GM12878 (cell line): ENCODE measurements at regions of chr7 and their contacts with region 1.

Region 1: GRCh38 chr7:17640730-17641377 is 299.4 kb downstream of the SNX13 start:
- DNase-seq: no peak
- ATAC-seq: peak; percentile 63
- H3K4me3 ChIP-seq: no peak overlapping the region
- H3K27ac ChIP-seq: no peak overlapping the region
- H3K4me1 ChIP-seq: no peaks in the 10 kb centered on the region
- H3K27me3 ChIP-seq: no peaks in the 10 kb centered on the region; a peak in 2 of 4 replicates
- CTCF ChIP-seq: peak; percentile 50 to 65 (median 62)
- EP300 ChIP-seq: no peak
- POLR2A ChIP-seq: no peak
- RAD21 ChIP-seq: peak; percentile 27; the same call in 1 of the 2 replicates

Region 2: GRCh38 chr7:17651926-17652385 is 11.1 kb after region 1 on chr7:
- CTCF ChIA-PET with region 1: interaction called, 14 read pairs
- POLR2A ChIA-PET with region 1: no interaction called
- RAD21 ChIA-PET with region 1: no interaction called
- SMC1A ChIA-PET with region 1: no interaction called
- in situ Hi-C with region 1: no loop called
- intact Hi-C with region 1: no loop called
- DNase-seq: no peak
- ATAC-seq: no peak
- H3K4me3 ChIP-seq: no peak overlapping the region
- H3K27ac ChIP-seq: no peak overlapping the region
- H3K4me1 ChIP-seq: no peaks in the 10 kb centered on the region
- H3K27me3 ChIP-seq: no peaks in the 10 kb centered on the region; a peak in 1 of 4 replicates
- CTCF ChIP-seq: no peak
- EP300 ChIP-seq: no peak
- POLR2A ChIP-seq: no peak
- RAD21 ChIP-seq: no peak

Region 3: GRCh38 chr7:17713584-17713983 is 72.7 kb after region 1 on chr7:
- CTCF ChIA-PET with region 1: no interaction called
- POLR2A ChIA-PET with region 1: no interaction called
- RAD21 ChIA-PET with region 1: no interaction called
- SMC1A ChIA-PET with region 1: no interaction called
- in situ Hi-C with region 1: no loop called
- intact Hi-C with region 1: no loop called
- DNase-seq: no peak
- ATAC-seq: no peak
- H3K4me3 ChIP-seq: no peak overlapping the region
- H3K27ac ChIP-seq: no peak overlapping the region
- H3K4me1 ChIP-seq: no peaks in the 10 kb centered on the region
- H3K27me3 ChIP-seq: 0 out of 4 replicates have a peak, but pooled peaks cover 0 to 3% of the 10 kb centered on the region in 2 experiments
- CTCF ChIP-seq: no peak
- EP300 ChIP-seq: no peak
- POLR2A ChIP-seq: no peak
- RAD21 ChIP-seq: no peak

Region 4: GRCh38 chr7:17725796-17726195 is 84.9 kb after region 1 on chr7:
- CTCF ChIA-PET with region 1: no interaction called
- POLR2A ChIA-PET with region 1: no interaction called
- RAD21 ChIA-PET with region 1: no interaction called
- SMC1A ChIA-PET with region 1: no interaction called
- in situ Hi-C with region 1: no loop called
- intact Hi-C with region 1: no loop called
- DNase-seq: no peak
- ATAC-seq: no peak
- H3K4me3 ChIP-seq: no peak overlapping the region
- H3K27ac ChIP-seq: no peak overlapping the region
- H3K4me1 ChIP-seq: no peaks in the 10 kb centered on the region
- H3K27me3 ChIP-seq: no peaks in the 10 kb centered on the region; a peak in 1 of 4 replicates
- CTCF ChIP-seq: no peak
- EP300 ChIP-seq: no peak
- POLR2A ChIP-seq: no peak
- RAD21 ChIP-seq: no peak